SK-N-SH (cell line): ENCODE measurements at regions of chr6 and their contacts with region 1.

Region 1: DNA sequence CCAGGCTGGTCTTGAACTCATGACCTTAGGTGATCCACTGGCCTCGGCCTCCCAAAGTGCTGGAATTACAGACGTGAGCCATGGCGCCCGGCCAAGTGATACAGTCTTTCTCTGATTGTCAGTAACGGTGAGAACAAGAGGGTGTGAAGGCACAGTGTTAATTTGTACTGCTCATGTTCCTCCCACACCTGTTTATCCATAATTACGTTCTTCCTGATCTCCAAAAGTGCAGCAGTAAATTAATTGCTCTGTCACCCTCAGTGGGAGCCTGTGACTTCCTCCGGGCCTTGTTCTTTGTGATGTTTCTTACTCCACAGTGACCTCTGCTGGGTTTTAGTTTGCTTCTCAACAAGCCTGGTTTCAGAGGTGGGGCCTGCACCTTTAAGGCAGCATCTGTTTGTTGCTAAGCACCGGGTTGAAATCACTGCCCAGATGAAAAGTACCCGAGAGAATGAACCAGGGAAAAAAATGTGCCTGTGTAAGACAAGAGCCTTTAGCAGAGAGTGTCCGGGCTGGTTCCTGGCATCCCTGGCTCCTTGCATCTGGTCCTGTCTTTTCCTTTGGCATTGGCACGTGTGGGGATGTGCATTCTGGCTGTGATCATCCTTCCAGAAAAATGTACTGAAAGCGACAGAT is 89.1 kb upstream of the CLDN20 start:
- DNase-seq: peak; percentile 83
- H3K4me3 ChIP-seq: no peak overlapping the region; a peak in 1 of 4 replicates
- H3K27ac ChIP-seq: peak overlapping the region; percentile 28 to 63
- H3K4me1 ChIP-seq: peaks cover 10 to 20% of the 10 kb centered on the region in 2 experiments
- H3K27me3 ChIP-seq: no peaks in the 10 kb centered on the region
- CTCF ChIP-seq: peak; percentile 74
- EP300 ChIP-seq: no peak
- RAD21 ChIP-seq: peak; percentile 92

Region 2: DNA sequence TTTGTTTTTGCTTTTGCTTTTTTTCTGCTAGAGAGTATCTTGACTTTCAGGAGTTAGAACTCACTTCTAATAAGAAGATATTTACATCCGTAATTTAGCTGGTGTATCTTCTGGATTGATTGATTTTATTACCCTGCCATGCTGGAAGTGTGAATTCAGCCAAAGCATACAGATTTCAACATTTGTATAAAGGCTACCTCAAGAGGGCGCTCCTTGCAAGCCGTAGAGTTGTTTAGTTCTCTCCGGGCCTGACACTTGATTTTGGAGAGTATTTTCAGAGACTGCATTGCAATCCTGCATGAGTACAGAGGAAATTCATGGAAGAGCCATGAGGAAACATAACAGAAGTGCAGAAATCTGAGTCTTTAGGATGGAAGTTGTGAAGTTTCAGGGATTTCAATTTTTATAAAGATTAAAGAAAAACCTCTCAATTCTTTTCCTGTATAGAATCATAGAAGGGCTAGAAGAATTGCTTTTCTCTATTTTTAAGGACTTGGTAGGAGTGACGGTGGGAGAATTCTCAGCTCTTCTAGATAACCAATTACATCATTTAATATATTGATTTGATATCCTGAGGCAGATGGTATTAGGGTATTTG is 246.3 kb before region 1 on chr6:
- CTCF ChIA-PET with region 1: interaction called, 132 read pairs
- POLR2A ChIA-PET with region 1: no interaction called
- DNase-seq: peak; percentile 62
- H3K4me3 ChIP-seq: no peak overlapping the region
- H3K27ac ChIP-seq: no peak overlapping the region
- H3K4me1 ChIP-seq: peaks cover 33 to 39% of the 10 kb centered on the region in 2 experiments
- H3K27me3 ChIP-seq: no peaks in the 10 kb centered on the region
- CTCF ChIP-seq: peak; percentile 80
- EP300 ChIP-seq: no peak
- RAD21 ChIP-seq: peak; percentile 97

Region 3: DNA sequence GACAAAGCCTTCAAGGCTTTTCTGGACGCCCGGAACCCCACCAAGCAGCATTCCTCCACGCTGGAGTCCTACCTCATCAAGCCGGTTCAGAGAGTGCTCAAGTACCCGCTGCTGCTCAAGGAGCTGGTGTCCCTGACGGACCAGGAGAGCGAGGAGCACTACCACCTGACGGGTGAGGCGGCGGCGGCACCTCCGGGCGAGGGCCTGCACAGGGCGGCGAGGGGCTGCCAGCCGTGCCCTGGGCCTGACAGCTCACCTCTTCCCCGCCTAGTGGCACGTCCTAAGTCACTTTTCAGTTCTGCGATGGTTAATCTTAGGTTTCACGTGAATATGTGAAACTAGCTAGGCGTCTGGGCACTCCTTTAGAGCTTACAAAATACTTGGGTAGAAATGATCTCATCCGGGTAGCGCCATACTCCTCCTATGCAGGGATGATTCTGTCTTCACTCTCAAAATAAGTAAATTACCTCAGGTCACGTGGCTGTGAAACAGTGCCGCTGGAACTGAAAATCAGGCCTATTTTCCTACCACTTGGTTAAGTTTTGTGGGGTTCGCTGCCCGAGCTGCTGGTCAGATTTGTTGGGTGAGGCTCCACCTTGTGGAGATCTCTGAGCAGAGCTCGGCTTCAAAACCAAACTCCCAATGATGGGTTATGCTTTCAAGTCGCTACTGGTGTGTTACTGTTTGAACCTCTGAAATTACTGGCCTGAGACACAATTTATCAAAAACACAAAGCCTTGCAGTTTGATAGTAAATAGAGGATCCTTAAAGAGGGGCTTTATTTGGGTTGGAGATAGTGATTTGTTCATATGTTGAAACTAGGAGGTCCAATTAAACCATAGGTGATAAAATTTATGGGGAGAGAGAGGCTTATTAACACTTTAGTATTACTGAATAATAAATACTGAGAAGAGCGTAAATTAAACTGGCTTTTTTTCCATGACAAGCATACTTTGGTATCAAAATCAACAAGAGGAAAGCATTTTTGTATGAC is 73.6 kb after region 1 on chr6:
- CTCF ChIA-PET with region 1: interaction called, 44 read pairs
- POLR2A ChIA-PET with region 1: no interaction called
- DNase-seq: peak; percentile 65
- H3K4me3 ChIP-seq: no peak overlapping the region
- H3K27ac ChIP-seq: peak overlapping the region; percentile 50 to 57
- H3K4me1 ChIP-seq: peaks cover 0 to 3% of the 10 kb centered on the region in 2 experiments; a peak in 3 of 4 replicates
- H3K27me3 ChIP-seq: no peaks in the 10 kb centered on the region
- CTCF ChIP-seq: peak; percentile 76
- EP300 ChIP-seq: no peak
- RAD21 ChIP-seq: peak; percentile 75

Region 4: GRCh38 chr6:155260686-155261085 is 86.0 kb after region 1 on chr6:
- CTCF ChIA-PET with region 1: interaction called, 10 read pairs
- POLR2A ChIA-PET with region 1: no interaction called
- DNase-seq: no peak
- H3K4me3 ChIP-seq: no peak overlapping the region
- H3K27ac ChIP-seq: peak overlapping the region; percentile 12 to 47; a peak in 2 of 4 replicates
- H3K4me1 ChIP-seq: peaks cover 4 to 64% of the 10 kb centered on the region in 2 experiments; a peak in 3 of 4 replicates
- H3K27me3 ChIP-seq: no peaks in the 10 kb centered on the region
- CTCF ChIP-seq: no peak
- EP300 ChIP-seq: no peak
- RAD21 ChIP-seq: no peak

Region 5: DNA sequence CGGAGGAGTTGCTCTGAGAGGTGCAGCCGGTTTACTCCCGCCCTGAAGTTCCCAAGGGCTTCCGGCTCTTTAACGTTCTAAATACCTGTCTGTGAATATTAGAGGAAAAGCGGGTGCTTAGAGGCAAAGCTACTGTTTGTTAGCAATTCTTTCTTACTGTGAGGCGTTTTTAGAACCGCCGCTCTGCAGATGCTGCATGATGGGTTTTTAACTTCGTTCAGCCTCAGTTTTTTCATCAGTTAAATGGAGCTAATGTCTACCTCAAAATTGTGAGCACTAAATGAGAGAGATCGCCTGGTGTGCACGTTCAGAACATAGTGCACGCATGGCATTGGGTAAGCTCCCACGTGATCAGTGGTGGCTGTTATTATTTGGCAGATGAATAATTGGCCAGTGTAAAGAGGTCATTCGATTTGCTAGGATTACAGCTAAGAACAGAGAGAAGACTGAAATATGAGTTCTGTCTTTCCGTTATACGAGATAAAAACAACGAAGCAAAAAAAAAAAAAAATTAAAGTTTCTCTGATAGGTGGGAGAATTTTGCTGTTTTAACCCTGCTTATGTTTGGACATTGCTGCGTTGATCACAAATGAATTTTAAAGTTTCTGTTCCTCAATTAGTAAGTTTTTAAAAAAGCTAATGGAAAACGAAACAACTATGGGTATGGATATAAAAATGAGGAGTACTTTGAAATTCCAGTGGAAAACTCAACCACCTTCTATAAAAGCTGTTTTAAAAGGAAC is 140.2 kb after region 1 on chr6:
- CTCF ChIA-PET with region 1: interaction called, 11 read pairs
- POLR2A ChIA-PET with region 1: no interaction called
- DNase-seq: peak; percentile 46
- H3K4me3 ChIP-seq: peak overlapping the region; percentile 95 to 99
- H3K27ac ChIP-seq: peak overlapping the region; percentile 83 to 97
- H3K4me1 ChIP-seq: peaks cover 15 to 22% of the 10 kb centered on the region in 2 experiments
- H3K27me3 ChIP-seq: no peaks in the 10 kb centered on the region
- CTCF ChIP-seq: no peak
- EP300 ChIP-seq: peak in 1 of 2 experiments; percentile 38; a peak in 1 of 4 replicates
- RAD21 ChIP-seq: no peak